ENCODE measurements at regions of chr15 and their contacts with region 1.

Region 1: DNA sequence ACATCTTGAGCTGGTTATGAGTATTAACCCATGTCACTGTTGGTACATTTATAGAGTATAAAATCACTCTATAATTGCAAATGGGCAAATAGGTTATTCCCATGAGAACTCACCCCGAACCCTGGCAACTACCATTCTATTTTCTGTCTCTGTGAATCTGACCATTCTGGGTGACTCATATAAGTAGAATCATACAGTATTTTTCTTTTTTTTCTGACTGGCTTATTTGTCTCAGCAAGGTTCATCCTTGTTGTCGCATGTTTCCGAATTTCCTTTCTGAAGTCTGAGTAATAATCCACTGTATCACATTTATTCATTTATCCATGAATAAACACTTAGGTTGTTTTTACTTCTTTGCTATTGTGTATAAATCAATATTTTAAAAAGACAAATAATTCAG is 59.9 kb upstream of the CHRM5 start:
- DNase-seq: no peak
- H3K4me3 ChIP-seq: no peak overlapping the region
- H3K27ac ChIP-seq: no peak overlapping the region
- H3K27me3 ChIP-seq: no peaks in the 10 kb centered on the region
- CTCF ChIP-seq: no peak

Region 2: DNA sequence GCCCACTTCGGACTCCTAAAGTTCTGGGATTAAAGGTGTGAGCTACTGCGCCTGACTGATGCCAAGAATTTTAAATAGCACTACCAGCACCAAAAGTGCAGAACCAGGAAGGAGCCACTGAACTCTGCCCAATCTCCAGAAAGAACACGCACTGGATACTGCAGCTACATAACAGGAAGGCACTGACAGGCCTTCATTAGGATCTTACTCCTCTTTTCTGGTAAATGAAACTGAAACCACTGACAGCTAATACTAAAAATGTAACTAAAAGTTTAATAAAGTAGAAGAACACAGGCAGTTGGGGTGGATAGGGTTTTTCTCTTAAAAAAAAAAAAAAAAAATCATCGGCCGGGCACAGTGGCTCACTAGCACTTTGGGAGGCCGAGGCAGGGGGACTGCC is 14.2 kb before region 1 on chr15:
- intact Hi-C with region 1: loop called in 1 of 2 experiments (anchors 2 kb)
- DNase-seq: no peak
- H3K4me3 ChIP-seq: no peak overlapping the region
- H3K27ac ChIP-seq: no peak overlapping the region
- H3K27me3 ChIP-seq: no peaks in the 10 kb centered on the region
- CTCF ChIP-seq: no peak

Measured in dorsolateral prefrontal cortex (tissue), 120 donors.